Adrenal gland (tissue), 19 donors: ENCODE measurements at regions of chr9 and their contacts with region 1.

Region 1: DNA sequence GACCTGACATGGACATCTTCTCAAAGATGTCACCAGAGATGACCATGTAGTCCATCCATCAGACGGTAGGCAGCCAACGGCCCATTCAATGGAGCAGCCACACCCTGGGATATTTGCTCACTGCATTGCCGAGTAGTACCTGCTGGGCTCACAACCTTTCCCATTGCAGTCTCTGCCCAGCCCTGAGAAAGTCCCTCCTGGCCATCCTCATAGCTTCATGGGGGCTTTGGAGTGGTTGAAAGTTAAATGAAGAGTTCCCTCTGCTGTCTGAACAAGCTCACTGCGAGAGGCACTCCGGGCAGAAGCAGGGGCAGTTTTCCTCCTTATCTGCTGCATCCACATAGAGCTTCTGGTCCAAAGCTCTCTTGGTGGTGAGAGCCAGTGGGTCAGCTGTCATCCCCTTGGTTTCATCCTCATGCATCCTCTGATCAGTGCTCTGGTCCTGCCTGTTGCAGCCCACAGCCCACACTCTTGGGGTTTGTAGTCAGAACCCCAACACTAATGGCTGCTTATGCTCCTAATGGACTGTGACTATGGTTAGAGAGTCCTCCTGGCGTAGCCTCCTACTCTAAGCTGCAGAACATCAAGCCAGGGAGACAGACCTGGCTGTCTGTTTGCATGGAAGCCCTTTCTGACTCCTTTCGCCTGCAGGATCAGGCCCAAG is 23.4 kb downstream of the TNFSF8 start:
- DNase-seq: peak in 3 of 7 donors; percentile 16 to 29 (median 19)
- H3K4me3 ChIP-seq: no peak overlapping the region
- H3K27ac ChIP-seq: no peak overlapping the region
- H3K4me1 ChIP-seq: no peaks in the 10 kb centered on the region
- H3K27me3 ChIP-seq: no peaks in the 10 kb centered on the region
- CTCF ChIP-seq: peak in 4 of 6 experiments; percentile 43 to 62 (median 50)
- POLR2A ChIP-seq: no peak

Region 2: GRCh38 chr9:114405294-114406034 is 501.6 kb before region 1 on chr9:
- intact Hi-C with region 1: loop called in 1 of 2 experiments (anchors 10 kb)
- DNase-seq: peak; percentile 74 to 90 (median 76)
- H3K4me3 ChIP-seq: no peak overlapping the region
- H3K27ac ChIP-seq: no peak overlapping the region
- H3K4me1 ChIP-seq: no peaks in the 10 kb centered on the region
- H3K27me3 ChIP-seq: no peaks in the 10 kb centered on the region
- CTCF ChIP-seq: peak; percentile 38 to 86 (median 70)
- POLR2A ChIP-seq: no peak

Region 3: GRCh38 chr9:114681594-114682332 is 225.3 kb before region 1 on chr9 and contains the start of gene TEX48:
- intact Hi-C with region 1: loop called (anchors 5 to 10 kb)
- DNase-seq: peak; percentile 54 to 81 (median 68)
- H3K4me3 ChIP-seq: no peak within 1 kb of the TSS
- H3K27ac ChIP-seq: no peak within 1 kb of the TSS
- H3K4me1 ChIP-seq: no peaks in the 10 kb centered on the region
- H3K27me3 ChIP-seq: no peaks in the 10 kb centered on the region
- CTCF ChIP-seq: peak; percentile 41 to 70 (median 46)
- POLR2A ChIP-seq: no peak
- total RNA-seq, gene TEX48: not detected

Region 4: DNA sequence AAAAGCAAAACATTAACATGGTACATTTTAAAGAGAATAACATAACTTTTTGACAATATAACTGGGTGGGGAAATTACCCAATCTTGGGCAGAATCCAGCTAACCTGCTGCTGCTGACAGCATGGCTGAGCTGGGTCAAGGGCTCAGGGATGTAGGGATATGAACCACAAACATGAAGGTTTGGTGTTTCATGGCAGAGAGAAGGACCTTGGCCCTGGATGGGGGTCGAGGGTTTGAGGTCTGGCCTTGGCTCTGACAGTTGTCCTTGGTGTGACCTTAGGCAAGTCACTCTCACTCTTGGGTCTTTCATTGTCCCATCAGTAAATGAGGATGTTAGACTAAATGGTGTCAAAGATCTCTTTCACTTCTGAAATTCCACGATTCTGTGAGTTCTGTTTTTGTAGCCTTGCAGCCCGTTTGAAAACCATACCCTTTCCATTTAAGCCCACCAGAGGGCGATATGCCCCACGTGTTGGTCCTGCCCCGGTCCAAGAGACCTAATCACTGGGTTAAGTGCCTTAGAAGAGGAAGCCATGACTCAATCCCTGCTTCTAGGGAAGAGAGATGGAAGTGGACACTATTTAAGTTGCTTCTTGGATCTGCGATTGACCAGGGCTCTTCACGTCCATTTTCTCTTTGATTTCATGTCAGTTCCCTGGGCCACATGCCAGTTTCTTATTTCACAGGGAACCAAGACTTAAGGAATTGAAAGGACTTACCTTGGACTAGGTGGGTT is 168.3 kb before region 1 on chr9:
- intact Hi-C with region 1: loop called (anchors 5 kb)
- DNase-seq: peak; percentile 66 to 91 (median 75)
- H3K4me3 ChIP-seq: no peak overlapping the region
- H3K27ac ChIP-seq: no peak overlapping the region
- H3K4me1 ChIP-seq: no peaks in the 10 kb centered on the region
- H3K27me3 ChIP-seq: no peaks in the 10 kb centered on the region
- CTCF ChIP-seq: peak; percentile 82 to 92 (median 88)
- POLR2A ChIP-seq: no peak

Region 5: GRCh38 chr9:115013998-115014397 is 107.0 kb after region 1 on chr9:
- intact Hi-C with region 1: loop called (anchors 5 to 10 kb)
- DNase-seq: peak; percentile 66 to 82 (median 71)
- H3K4me3 ChIP-seq: no peak overlapping the region
- H3K27ac ChIP-seq: no peak overlapping the region
- H3K4me1 ChIP-seq: no peaks in the 10 kb centered on the region
- H3K27me3 ChIP-seq: no peaks in the 10 kb centered on the region
- CTCF ChIP-seq: peak; percentile 76 to 88 (median 84)
- POLR2A ChIP-seq: no peak

Region 6: GRCh38 chr9:115034769-115035168 is 127.7 kb after region 1 on chr9:
- intact Hi-C with region 1: no loop called
- DNase-seq: no peak
- H3K4me3 ChIP-seq: no peak overlapping the region
- H3K27ac ChIP-seq: no peak overlapping the region
- H3K4me1 ChIP-seq: no peaks in the 10 kb centered on the region
- H3K27me3 ChIP-seq: no peaks in the 10 kb centered on the region
- CTCF ChIP-seq: no peak
- POLR2A ChIP-seq: no peak